ENCODE measurements at regions of chr3 and their contacts with region 1.

Region 1: DNA sequence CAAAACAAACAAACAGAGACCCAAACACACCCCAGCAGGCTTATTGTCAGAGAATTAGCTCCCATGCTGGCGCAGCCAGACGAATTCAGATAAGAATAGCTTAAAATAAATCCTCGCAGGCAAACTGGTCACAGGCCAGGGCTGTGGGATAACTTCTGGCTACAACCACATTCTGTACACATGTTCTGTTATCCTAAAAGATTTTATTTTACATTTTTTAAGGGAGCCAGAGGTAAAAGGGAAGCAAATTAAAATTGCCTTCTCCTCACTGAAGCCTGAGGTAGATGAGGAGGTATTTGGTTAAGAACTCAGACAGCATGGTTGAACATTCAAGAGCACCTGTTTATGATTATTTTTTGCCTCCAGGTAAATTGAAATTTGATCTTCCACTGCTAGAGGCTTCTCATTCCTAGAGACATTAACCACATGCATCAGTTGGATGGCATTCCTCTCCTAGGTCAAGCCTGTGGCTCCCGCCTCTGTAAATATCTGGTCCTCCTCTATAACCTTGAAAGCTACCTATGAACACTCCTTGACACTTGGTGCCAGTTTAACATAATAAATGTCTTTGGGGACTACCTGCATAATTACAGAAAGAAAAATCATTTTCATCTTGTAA is 190.3 kb downstream of the SATB1 start:
- DNase-seq: no peak
- H3K4me3 ChIP-seq: no peak overlapping the region
- H3K27ac ChIP-seq: no peak overlapping the region
- H3K4me1 ChIP-seq: no peaks in the 10 kb centered on the region
- H3K27me3 ChIP-seq: peaks cover 9% of the 10 kb centered on the region
- CTCF ChIP-seq: no peak

Region 2: GRCh38 chr3:17500618-17501017 is 734.2 kb before region 1 on chr3:
- CTCF ChIA-PET with region 1: no interaction called
- POLR2A ChIA-PET with region 1: interaction called, 13 read pairs
- intact Hi-C with region 1: no loop called
- DNase-seq: no peak
- H3K4me3 ChIP-seq: no peak overlapping the region
- H3K27ac ChIP-seq: no peak overlapping the region
- H3K4me1 ChIP-seq: no peaks in the 10 kb centered on the region
- H3K27me3 ChIP-seq: no peaks in the 10 kb centered on the region
- CTCF ChIP-seq: no peak

Region 3: DNA sequence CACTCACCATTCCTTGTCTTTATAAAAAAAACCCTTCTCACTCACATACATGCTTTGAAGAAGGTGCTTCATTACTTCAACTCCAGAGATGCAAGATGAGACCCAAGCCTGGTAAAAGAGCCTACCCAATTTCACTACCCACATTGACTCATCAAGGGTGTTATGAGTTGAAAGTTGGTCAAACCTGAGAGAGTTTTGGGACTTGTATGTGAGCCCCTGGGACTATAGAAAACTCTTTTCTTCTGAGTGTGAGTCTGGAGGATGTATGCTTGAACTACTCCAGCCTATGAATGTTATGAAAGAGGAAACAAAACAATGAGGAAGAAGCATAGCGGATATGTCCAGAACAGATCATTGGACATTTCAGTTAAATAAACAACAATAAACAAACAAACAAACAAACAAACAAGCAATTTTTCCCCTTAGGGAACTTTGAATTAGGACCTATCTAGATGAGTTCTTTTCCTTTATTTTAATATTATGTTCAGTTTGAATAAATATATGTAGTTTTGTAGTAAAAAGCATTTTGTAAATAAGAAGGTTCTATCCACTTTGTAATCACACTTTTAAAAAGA is 296.9 kb after region 1 on chr3:
- CTCF ChIA-PET with region 1: no interaction called
- POLR2A ChIA-PET with region 1: no interaction called
- intact Hi-C with region 1: no loop called
- DNase-seq: no peak
- H3K4me3 ChIP-seq: no peak overlapping the region
- H3K27ac ChIP-seq: no peak overlapping the region
- H3K4me1 ChIP-seq: no peaks in the 10 kb centered on the region
- H3K27me3 ChIP-seq: no peaks in the 10 kb centered on the region
- CTCF ChIP-seq: no peak